Activated B cell treated with CpG ODN at 0.5 μM for 24 hours (primary cell): ENCODE measurements at regions of chr5 and their contacts with region 1.

Region 1: DNA sequence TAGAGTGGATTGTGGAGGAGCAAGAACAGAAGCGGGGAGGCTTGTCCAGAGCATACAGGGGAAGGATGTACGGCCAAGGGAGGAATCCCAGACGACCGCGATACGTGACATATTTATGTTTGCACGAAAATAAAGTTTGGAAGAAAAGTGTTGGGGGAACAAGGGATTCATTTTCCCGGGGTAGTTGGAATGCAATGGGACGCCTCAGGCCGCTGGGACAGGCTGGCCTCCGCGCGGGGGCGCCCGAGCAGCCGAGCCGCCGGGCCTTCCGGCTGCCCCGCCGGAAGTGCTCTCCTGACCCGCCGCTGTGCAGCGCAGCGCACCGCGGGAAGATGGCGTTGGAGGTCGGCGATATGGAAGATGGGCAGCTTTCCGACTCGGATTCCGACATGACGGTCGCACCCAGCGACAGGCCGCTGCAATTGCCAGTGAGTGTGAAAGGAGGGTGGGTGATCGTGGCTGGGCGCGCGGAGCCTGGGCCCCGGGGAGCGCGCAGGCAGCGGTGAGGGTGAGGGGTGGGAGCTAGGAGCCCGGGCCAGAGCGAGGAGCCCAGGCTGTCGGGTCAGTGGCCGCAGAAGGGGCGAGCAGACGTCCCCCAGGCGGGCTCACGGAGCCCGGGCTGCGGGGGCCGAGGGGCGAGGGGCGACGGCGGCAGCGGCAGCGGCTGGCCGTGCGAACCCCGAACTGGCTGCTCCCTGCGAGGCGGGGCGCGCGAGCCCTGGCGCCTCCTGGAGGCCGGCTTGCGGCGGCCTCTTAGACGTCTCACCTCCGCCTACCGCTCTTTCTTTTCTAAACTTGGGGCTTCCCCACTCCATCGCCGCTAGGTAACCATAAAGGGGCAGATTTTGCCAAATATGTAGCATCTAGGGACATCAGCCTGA is at the start of gene PHAX:
- DNase-seq: peak; percentile 76
- ATAC-seq: peak; percentile 94
- H3K4me3 Mint-ChIP-seq: peak within 1 kb of the TSS; percentile 99
- H3K27ac Mint-ChIP-seq: peak within 1 kb of the TSS; percentile 95
- H3K4me1 Mint-ChIP-seq: peaks cover 36% of the 10 kb centered on the region
- H3K27me3 Mint-ChIP-seq: no peaks in the 10 kb centered on the region
- CTCF ChIP-seq: no peak
- total RNA-seq, gene PHAX: 31.0 and 33.3 TPM in 2 replicates

Region 2: DNA sequence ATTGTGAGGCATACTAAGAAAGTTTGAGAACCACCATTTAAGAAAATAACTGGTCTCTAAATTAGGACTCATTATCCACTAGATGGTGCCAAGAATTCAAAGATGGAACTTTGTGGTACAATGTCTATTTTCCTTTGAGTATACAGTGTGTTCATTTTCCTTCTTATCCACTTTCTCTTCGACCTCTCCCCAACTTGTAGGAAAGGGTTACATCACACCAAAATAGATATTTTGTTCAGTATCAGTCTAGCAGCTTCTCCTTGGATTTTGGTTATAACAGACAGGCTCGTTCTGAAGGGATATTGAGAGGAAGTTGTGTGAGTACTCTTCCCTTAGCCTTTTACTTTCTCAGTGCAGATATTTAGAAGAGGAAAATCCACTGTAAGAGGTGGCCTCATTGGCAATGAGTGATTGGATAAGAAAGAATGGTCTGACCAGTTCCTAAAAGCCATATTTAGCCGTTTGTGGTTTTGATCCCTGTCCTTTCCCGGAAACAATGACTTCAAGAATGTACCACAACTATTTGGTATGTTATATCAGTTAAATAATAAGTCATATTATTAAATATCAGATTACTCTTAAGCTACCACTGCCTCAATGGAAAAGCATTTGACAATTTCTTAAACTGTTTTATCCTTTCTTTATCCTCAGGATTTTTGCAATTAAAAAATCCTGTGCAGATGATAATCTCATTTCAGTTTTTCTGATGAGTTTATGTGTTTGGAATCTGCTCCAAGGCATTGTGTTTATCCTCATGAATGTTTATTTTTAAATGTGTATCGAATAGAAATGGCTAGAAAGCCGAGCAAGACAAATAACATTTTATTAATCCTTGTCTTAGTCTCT is 246.6 kb before region 1 on chr5:
- CTCF ChIA-PET with region 1: interaction called, 5 read pairs
- POLR2A ChIA-PET with region 1: no interaction called
- intact Hi-C with region 1: loop called (anchors 1 kb)
- DNase-seq: no peak
- ATAC-seq: peak; percentile 42
- H3K4me3 Mint-ChIP-seq: no peak overlapping the region
- H3K27ac Mint-ChIP-seq: no peak overlapping the region
- H3K4me1 Mint-ChIP-seq: peaks cover 4% of the 10 kb centered on the region
- H3K27me3 Mint-ChIP-seq: peaks cover 21% of the 10 kb centered on the region
- CTCF ChIP-seq: no peak

Region 3: DNA sequence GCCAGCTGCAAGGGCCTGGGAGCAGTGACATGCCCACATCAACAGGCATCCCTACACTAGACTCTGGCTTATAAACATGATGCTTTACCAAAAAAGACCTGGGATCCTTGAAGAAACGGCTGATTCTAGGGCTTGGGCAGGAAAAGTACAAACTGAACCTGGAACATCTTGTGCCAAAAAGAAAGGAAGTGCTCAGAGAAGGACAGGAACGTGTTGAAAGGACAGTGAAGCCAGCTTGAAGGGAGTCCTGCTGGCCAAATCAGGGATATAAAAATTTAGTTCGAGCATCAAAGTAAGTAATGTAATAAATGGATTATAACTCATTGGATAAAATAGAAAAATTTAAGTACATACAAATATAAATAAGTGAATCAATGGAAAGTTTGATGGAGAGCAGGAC is 64.0 kb before region 1 on chr5:
- CTCF ChIA-PET with region 1: interaction called, 3 read pairs
- POLR2A ChIA-PET with region 1: no interaction called
- intact Hi-C with region 1: loop called (anchors 2 kb)
- DNase-seq: no peak
- ATAC-seq: no peak
- H3K4me3 Mint-ChIP-seq: no peak overlapping the region
- H3K27ac Mint-ChIP-seq: no peak overlapping the region
- H3K4me1 Mint-ChIP-seq: no peaks in the 10 kb centered on the region
- H3K27me3 Mint-ChIP-seq: peaks cover 1% of the 10 kb centered on the region
- CTCF ChIP-seq: no peak

Region 4: DNA sequence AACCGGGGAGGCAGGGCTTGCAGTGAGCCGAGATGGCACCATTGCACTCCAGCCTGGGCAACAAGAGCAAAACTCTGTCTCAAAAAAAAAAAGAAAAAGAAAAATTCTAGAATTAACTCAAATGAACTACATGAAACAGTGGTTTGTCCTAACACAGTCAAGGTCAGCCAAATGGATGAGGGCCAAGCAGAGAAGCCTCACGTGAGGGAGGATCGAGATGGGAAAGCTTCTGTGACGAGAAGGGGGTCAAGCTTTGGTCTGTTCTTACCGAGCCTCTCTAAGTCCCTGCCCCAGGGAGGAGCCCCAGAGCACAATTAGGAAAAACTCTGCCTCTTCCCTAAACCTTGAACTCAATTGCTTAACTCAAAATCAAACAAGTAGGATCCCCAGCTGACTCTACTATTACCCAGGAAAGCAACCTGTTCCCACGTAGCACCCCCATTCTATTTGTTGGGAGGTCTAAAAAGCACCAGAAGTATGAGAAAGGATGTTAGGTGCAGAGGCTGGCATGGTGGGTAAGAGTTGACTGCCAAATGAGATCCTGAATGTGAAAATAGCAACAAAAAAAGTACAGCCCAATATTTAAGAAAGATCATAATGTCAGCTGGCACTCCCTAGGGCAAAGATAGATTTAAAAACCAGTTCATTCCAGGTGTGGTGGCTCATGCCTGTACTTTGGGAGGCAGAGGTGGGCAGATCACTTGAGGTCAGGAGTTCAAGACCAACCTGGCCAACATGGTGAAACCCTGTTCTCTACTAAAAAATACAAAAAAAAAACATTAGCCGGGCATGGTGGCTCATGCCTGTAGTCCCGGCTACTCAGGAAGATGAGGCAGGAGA is 13.1 kb before region 1 on chr5:
- CTCF ChIA-PET with region 1: no interaction called
- POLR2A ChIA-PET with region 1: no interaction called
- intact Hi-C with region 1: no loop called
- DNase-seq: no peak
- ATAC-seq: no peak
- H3K4me3 Mint-ChIP-seq: no peak overlapping the region
- H3K27ac Mint-ChIP-seq: no peak overlapping the region
- H3K4me1 Mint-ChIP-seq: no peaks in the 10 kb centered on the region
- H3K27me3 Mint-ChIP-seq: peaks cover 2% of the 10 kb centered on the region
- CTCF ChIP-seq: no peak

Region 5: DNA sequence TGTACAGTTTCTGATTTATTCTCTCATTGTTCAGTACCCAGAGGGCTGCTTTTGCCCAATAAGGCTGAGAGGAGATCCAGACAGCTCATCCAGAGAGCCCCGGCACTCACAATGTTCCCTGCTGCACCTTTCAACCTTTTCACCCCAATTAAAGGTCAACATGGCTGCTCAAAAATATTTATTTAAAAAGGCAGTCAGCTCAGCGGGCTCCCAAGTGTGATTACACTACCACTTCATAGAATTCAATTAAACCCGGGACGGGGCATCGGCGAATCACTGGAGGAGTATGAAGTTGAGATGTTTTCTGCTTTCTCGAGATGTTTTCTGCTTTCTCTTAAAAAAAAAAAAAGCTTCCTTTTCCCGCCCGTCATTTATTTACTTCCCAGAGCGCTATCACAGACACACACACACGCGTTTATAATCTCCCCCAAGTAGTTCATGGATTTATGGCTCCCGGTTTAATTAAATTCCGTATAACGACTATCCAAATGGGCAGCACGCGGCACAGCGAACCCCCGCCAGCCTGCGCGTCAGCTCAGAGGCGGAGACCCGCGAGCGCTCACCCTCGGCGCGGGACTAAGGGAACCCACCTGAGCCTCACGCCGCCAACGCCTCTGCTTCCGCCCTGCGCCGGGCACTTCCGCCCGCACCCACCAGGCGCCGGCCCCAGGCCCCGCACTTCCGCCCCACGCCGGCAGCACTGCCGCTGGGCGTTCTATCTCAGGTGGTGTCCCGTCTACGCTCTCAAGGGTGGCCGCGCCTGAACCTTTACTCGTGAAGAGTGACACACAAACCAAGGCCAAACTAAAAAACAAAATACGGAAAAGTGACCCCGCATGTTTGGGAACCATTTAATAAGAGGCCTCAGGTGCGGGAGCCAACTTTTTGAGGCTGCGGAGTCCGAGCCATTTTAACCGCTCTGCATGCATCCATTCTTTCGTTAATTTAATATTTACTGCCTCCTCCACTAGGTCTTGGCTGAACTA is 472.3 kb after region 1 on chr5 and contains the start of gene C5orf63:
- CTCF ChIA-PET with region 1: no interaction called
- POLR2A ChIA-PET with region 1: interaction called, 10 read pairs
- intact Hi-C with region 1: no loop called
- DNase-seq: peak; percentile 77
- ATAC-seq: peak; percentile 99
- H3K4me3 Mint-ChIP-seq: peak within 1 kb of the TSS; percentile 87
- H3K27ac Mint-ChIP-seq: peak within 1 kb of the TSS; percentile 87
- H3K4me1 Mint-ChIP-seq: peaks cover 9% of the 10 kb centered on the region
- H3K27me3 Mint-ChIP-seq: no peaks in the 10 kb centered on the region
- CTCF ChIP-seq: no peak
- total RNA-seq, gene C5orf63: 20.4 and 22.5 TPM in 2 replicates

Region 6: GRCh38 chr5:127517480-127518318 is 916.8 kb after region 1 on chr5 and contains the start of gene PRRC1:
- CTCF ChIA-PET with region 1: no interaction called
- POLR2A ChIA-PET with region 1: no interaction called
- intact Hi-C with region 1: loop called (anchors 5 kb)
- DNase-seq: peak; percentile 66
- ATAC-seq: peak; percentile 97
- H3K4me3 Mint-ChIP-seq: peak within 1 kb of the TSS; percentile 88
- H3K27ac Mint-ChIP-seq: peak within 1 kb of the TSS; percentile 68
- H3K4me1 Mint-ChIP-seq: peaks cover 27% of the 10 kb centered on the region
- H3K27me3 Mint-ChIP-seq: peaks cover 3% of the 10 kb centered on the region
- CTCF ChIP-seq: no peak
- total RNA-seq, gene PRRC1: 33.6 and 34.7 TPM in 2 replicates